Common myeloid progenitor, CD34-positive (primary cell): ENCODE measurements at regions of chrX and their contacts with region 1.

Region 1: GRCh38 chrX:130079824-130080406 is 30.4 kb downstream of the ELF4 start:
- DNase-seq: peak; percentile 52 to 73 (median 66)
- H3K4me3 ChIP-seq: no peak overlapping the region
- H3K27ac ChIP-seq: no peak overlapping the region
- H3K4me1 ChIP-seq: peaks cover 2 to 48% (median 41%) of the 10 kb centered on the region in 4 experiments
- H3K27me3 ChIP-seq: no peaks in the 10 kb centered on the region

Region 2: DNA sequence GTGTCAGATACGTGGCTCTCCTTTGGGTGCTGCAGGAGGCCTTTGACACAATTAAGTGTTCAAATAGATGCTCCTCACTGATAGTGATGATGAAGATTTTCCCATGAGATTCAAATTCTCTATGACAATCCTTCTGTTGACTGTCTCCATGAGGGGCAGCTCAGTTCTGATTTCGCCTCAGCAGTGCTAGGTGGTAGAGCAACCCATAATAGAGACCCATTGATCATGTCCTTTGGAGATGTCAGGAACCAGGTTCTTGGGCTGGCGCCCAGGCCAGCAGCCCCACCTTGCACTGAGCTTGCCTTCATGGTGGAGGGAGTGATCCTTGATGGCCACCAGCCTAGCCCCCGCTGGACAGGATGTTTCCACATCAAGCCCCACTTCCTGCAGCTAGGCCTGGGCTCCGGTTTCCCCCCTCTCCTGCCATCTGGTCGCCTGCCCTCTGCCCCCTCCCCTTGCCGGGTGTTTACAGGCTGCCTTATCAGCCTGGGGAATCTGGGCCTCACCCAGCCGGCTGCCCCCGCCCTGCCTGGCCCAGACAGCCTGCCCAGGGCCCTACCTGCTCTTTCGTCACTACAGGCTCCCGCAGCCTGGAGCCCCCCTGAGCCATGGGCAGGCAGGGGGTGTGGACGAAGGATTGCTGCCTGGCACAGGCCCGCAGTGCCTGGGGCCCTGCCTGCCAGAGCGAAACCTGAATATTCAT is 17.7 kb after region 1 on chrX:
- CTCF ChIA-PET with region 1: interaction called, 14 read pairs
- POLR2A ChIA-PET with region 1: interaction called, 3 read pairs
- DNase-seq: peak; percentile 71 to 95 (median 93)
- H3K4me3 ChIP-seq: peak overlapping the region in 2 of 7 experiments; percentile 36 to 50
- H3K27ac ChIP-seq: peak overlapping the region in 1 of 2 experiments; percentile 34
- H3K4me1 ChIP-seq: peaks cover 13 to 66% (median 54%) of the 10 kb centered on the region in 4 experiments
- H3K27me3 ChIP-seq: no peaks in the 10 kb centered on the region

Region 3: GRCh38 chrX:130110379-130111219 is 30.7 kb after region 1 on chrX and contains the start of gene ELF4:
- CTCF ChIA-PET with region 1: interaction called, 26 read pairs
- POLR2A ChIA-PET with region 1: interaction called, 4 read pairs
- DNase-seq: peak; percentile 68 to 82 (median 76)
- H3K4me3 ChIP-seq: peak within 1 kb of the TSS; percentile 55 to 80 (median 69)
- H3K27ac ChIP-seq: peak within 1 kb of the TSS; percentile 64 to 87
- H3K4me1 ChIP-seq: peaks cover 3 to 36% (median 29%) of the 10 kb centered on the region in 4 experiments
- H3K27me3 ChIP-seq: peaks cover 0 to 2% (median 0%) of the 10 kb centered on the region in 5 experiments

Region 4: DNA sequence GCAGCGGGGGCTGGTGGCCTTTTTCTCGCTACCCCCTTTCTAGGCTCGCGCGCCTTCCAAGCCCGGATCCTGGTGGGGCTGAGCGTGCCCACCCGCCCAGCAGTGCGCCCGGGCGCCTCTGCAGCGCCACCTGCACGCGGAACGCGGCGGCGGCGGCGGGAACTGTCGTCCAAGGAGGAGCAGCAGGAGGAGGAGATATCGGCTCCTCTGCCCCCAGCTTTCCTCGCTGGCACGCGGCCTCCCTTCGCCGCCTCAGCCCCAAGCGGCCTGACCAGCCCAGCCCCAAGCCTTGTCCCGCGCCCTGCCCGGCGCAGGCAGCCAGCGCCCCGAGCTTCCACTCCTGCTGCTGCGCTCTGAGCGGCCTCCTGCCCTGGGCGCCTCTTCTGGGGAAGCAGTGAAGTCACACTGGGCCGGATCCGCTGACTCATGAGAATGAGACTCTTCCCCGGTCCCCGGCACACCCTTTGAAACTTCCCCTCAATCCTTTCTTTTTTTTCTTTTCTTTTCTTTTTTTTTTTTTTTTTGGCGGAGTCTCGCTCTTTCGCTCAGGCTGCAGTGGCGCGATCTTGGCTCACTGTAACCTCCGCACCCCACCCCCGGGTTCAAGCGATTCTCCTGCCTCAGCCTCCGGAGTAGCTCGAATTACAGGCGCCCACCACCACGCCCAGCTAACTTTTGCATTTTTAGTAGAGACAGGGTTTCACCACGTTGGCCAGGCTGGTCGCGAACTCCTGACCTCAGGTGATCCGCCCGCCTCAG is 41.0 kb after region 1 on chrX:
- CTCF ChIA-PET with region 1: interaction called, 86 read pairs
- POLR2A ChIA-PET with region 1: interaction called, 6 read pairs
- DNase-seq: peak; percentile 77 to 89 (median 86)
- H3K4me3 ChIP-seq: peak overlapping the region; percentile 26 to 70 (median 50)
- H3K27ac ChIP-seq: no peak overlapping the region
- H3K4me1 ChIP-seq: peaks cover 0 to 34% (median 22%) of the 10 kb centered on the region in 4 experiments
- H3K27me3 ChIP-seq: peaks cover 0 to 6% (median 0%) of the 10 kb centered on the region in 5 experiments

Region 5: GRCh38 chrX:130190801-130191200 is 110.9 kb after region 1 on chrX:
- CTCF ChIA-PET with region 1: interaction called, 22 read pairs
- POLR2A ChIA-PET with region 1: no interaction called
- DNase-seq: no peak
- H3K4me3 ChIP-seq: no peak overlapping the region
- H3K27ac ChIP-seq: no peak overlapping the region
- H3K4me1 ChIP-seq: no peaks in the 10 kb centered on the region
- H3K27me3 ChIP-seq: no peaks in the 10 kb centered on the region